Heart left ventricle (tissue), 16 donors: ENCODE measurements at regions of chr15 and their contacts with region 1.

Region 1: DNA sequence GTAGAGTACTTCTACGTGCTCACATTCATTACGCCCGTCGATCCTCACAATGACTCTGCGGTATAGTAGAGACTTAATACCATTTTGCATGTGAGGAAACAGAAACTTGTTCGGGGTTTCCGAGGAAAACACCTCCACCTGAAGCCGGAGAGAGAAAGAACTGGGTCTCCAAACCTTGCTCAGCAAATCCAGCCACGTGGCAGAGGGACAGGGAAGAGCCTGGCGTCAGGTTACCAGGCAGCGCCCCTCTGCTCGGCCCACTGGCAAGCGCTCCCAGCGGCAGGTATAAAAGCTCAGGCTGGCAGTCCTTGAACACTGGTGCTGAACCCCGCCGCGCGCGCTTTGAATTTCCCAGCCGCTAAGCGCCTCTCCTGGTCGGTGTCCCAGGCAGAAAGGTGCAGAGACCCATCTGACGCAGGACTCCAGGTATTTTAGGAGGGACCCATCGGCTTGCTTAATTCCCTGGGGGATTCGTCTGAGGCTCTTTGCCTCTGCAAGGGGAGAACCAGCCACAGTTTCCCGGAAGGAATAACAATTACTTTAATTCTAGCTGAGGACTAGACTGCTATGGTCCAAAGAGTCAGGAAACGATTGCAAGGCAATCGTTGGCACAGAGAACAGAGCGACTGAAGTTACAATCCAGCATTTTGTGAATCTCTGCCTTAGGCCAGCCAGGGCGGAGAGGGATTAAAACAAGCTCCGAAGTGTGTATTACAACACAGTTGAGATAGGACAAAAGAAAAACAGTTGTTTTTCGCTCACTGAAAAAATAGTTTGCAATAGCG is at the start of gene C2CD4A:
- DNase-seq: peak; percentile 52 to 78 (median 56)
- ATAC-seq: peak; percentile 71 to 86 (median 74)
- H3K4me3 ChIP-seq: peak within 1 kb of the TSS; percentile 28 to 73 (median 56)
- H3K27ac ChIP-seq: peak within 1 kb of the TSS in 2 of 12 donors; percentile 7 to 40
- H3K4me1 ChIP-seq: peaks cover 0 to 26% (median 12%) of the 10 kb centered on the region in 12 donors
- H3K27me3 ChIP-seq: peaks cover 0 to 12% (median 0%) of the 10 kb centered on the region in 9 donors
- CTCF ChIP-seq: peak in 4 of 12 donors; percentile 9 to 25 (median 16)
- POLR2A ChIP-seq: no peak
- total RNA-seq, gene C2CD4A: not detected

Region 2: GRCh38 chr15:61871926-61872522 is 194.8 kb before region 1 on chr15:
- intact Hi-C with region 1: loop called in 8 of 10 experiments (anchors 2 to 10 kb)
- DNase-seq: no peak
- ATAC-seq: no peak
- H3K4me3 ChIP-seq: no peak overlapping the region
- H3K27ac ChIP-seq: no peak overlapping the region
- H3K4me1 ChIP-seq: no peaks in the 10 kb centered on the region
- H3K27me3 ChIP-seq: no peaks in the 10 kb centered on the region
- CTCF ChIP-seq: peak; percentile 35 to 67 (median 50)
- POLR2A ChIP-seq: no peak

Region 3: GRCh38 chr15:61974759-61975158 is 92.1 kb before region 1 on chr15:
- intact Hi-C with region 1: loop called in 2 of 10 experiments (anchors 5 to 10 kb)
- DNase-seq: no peak
- ATAC-seq: peak; percentile 73 to 88 (median 80)
- H3K4me3 ChIP-seq: no peak overlapping the region
- H3K27ac ChIP-seq: peak overlapping the region in 7 of 12 donors; percentile 0 to 31 (median 24)
- H3K4me1 ChIP-seq: peaks cover 0 to 20% (median 2%) of the 10 kb centered on the region in 12 donors
- H3K27me3 ChIP-seq: no peaks in the 10 kb centered on the region
- CTCF ChIP-seq: no peak
- POLR2A ChIP-seq: no peak

Region 4: GRCh38 chr15:62165104-62165792 is 98.4 kb after region 1 on chr15 and contains the start of gene C2CD4B:
- intact Hi-C with region 1: loop called in 1 of 10 experiments (anchors 5 kb)
- DNase-seq: peak; percentile 71 to 86 (median 79)
- ATAC-seq: peak; percentile 90 to 97 (median 92)
- H3K4me3 ChIP-seq: peak within 1 kb of the TSS; percentile 41 to 73 (median 57)
- H3K27ac ChIP-seq: peak within 1 kb of the TSS; percentile 61 to 83 (median 78)
- H3K4me1 ChIP-seq: peaks cover 0 to 23% (median 8%) of the 10 kb centered on the region in 12 donors
- H3K27me3 ChIP-seq: peaks cover 0 to 51% (median 28%) of the 10 kb centered on the region in 9 donors
- CTCF ChIP-seq: no peak
- POLR2A ChIP-seq: peak in 1 of 2 donors; percentile 90
- total RNA-seq, gene C2CD4B: 0.65 to 8.4 (median 2.3) TPM

Region 5: GRCh38 chr15:62254137-62254934 is 187.5 kb after region 1 on chr15:
- intact Hi-C with region 1: loop called in 4 of 10 experiments (anchors 5 to 10 kb)
- DNase-seq: peak; percentile 61 to 82 (median 67)
- ATAC-seq: peak in 3 of 4 donors; percentile 49 to 79 (median 50)
- H3K4me3 ChIP-seq: no peak overlapping the region
- H3K27ac ChIP-seq: no peak overlapping the region
- H3K4me1 ChIP-seq: no peaks in the 10 kb centered on the region
- H3K27me3 ChIP-seq: no peaks in the 10 kb centered on the region
- CTCF ChIP-seq: peak; percentile 56 to 81 (median 72)
- POLR2A ChIP-seq: no peak

Region 6: GRCh38 chr15:62306851-62307504 is 240.1 kb after region 1 on chr15:
- intact Hi-C with region 1: loop called in 7 of 10 experiments (anchors 2 to 10 kb)
- DNase-seq: peak in 4 of 5 donors; percentile 41 to 69 (median 58)
- ATAC-seq: peak; percentile 82 to 94 (median 90)
- H3K4me3 ChIP-seq: no peak overlapping the region
- H3K27ac ChIP-seq: no peak overlapping the region
- H3K4me1 ChIP-seq: peaks cover 0 to 17% (median 7%) of the 10 kb centered on the region in 12 donors
- H3K27me3 ChIP-seq: no peaks in the 10 kb centered on the region
- CTCF ChIP-seq: peak; percentile 50 to 79 (median 66)
- POLR2A ChIP-seq: no peak